HEK293 (cell line): ENCODE measurements at regions of chr1 and their contacts with region 1.

Region 1: DNA sequence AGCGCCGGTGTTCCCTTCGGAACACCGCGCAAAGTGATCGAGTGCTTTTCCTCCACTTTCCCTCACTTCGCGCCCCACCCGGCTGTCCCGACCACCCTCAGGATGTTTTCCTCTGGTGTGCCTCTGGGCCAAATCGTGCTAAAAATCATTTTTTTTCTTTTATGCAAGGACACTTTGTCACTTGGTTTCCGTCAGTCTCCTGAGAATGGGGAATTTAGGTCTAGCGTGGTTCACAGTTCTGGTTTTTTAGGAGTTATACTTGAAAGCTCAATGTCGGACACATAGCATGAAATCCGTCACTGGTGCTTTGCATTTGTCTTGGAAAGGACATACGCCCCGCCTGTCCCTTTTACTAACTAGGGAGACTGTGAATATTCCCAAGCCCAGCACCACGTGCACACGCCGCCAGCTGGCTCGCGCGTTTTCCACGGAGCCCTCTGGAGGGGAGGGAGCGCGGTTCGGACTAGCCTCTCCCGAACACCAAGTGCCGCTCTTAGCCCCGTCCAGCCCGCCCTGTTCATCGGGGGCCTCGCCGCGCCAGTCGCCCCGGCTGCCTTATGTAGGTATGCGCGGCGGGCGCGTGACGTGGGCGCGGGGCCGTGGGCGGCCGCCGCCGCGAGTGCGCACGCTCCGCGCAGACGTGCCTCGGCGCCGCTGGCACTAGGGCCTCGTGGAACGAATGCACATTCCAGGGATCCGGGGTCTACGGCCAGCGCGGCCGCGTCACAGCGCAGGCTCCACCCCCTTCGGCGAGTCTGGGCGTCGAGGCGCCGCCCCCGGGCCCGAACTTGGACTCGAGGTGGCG is 572 bp upstream of the IRF2BP2 start:
- H3K4me3 ChIP-seq: peak overlapping the region; percentile 49
- H3K27ac ChIP-seq: peak overlapping the region; percentile 96
- H3K4me1 ChIP-seq: peaks cover 25% of the 10 kb centered on the region
- CTCF ChIP-seq: peak; percentile 72

Region 2: DNA sequence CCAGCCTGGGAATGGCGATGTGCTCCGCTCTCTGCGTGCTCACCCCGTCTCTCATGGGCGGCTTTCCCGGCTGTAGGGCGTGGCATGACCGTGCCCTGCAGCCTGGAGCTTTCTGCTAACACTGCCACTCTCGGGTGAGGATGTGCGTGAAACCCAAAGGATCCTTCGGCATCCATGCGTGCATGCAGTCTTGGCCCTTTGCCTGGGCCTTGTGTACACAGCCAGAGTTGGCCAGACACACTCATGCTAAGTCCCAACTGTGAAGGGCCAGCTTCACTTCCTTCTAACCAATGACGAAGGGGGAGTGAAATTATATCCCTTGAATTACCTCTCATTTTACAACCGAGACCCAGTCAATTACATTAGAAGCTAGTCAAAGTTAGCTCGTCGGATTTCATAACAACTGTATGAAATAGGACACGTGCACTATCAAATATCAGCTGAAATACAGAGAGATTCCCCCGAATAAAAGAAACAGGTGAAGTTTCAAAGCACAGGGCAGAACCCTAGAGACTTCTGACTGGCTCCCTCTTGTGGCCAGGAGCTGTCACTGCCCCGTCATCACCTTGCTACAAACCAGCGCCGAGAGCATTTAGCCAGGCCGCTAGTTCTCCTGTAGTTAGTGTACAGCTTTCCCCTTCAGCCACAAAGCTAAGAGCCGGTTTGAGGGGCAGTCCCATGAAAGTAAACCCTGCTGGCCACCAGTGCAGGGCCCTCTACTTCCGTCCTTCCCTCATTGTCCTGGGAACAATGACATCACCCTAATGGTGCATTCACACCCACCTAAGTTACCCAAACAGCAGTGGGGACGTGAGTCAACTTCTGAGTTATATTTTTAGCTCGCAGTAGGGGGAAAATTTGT is 300.7 kb before region 1 on chr1:
- CTCF ChIA-PET with region 1: no interaction called
- POLR2A ChIA-PET with region 1: no interaction called
- H3K4me3 ChIP-seq: no peak overlapping the region
- H3K27ac ChIP-seq: no peak overlapping the region
- H3K4me1 ChIP-seq: no peaks in the 10 kb centered on the region
- CTCF ChIP-seq: peak; percentile 86

Region 3: GRCh38 chr1:234499119-234499942 is 111.2 kb before region 1 on chr1:
- CTCF ChIA-PET with region 1: interaction called, 46 read pairs
- POLR2A ChIA-PET with region 1: interaction called, 12 read pairs
- H3K4me3 ChIP-seq: no peak overlapping the region
- H3K27ac ChIP-seq: peak overlapping the region; percentile 42
- H3K4me1 ChIP-seq: peaks cover 15% of the 10 kb centered on the region
- CTCF ChIP-seq: peak; percentile 98

Region 4: GRCh38 chr1:234578721-234579120 is 31.8 kb before region 1 on chr1:
- CTCF ChIA-PET with region 1: no interaction called
- POLR2A ChIA-PET with region 1: no interaction called
- H3K4me3 ChIP-seq: no peak overlapping the region
- H3K27ac ChIP-seq: no peak overlapping the region
- H3K4me1 ChIP-seq: 0 out of 2 replicates have a peak, but pooled peaks cover 2% of the 10 kb centered on the region
- CTCF ChIP-seq: no peak

Region 5: GRCh38 chr1:234589064-234589800 is 21.3 kb before region 1 on chr1:
- CTCF ChIA-PET with region 1: no interaction called
- POLR2A ChIA-PET with region 1: no interaction called
- H3K4me3 ChIP-seq: no peak overlapping the region
- H3K27ac ChIP-seq: no peak overlapping the region
- H3K4me1 ChIP-seq: peaks cover 7% of the 10 kb centered on the region; the same call in 1 of the 2 replicates
- CTCF ChIP-seq: no peak

Region 6: DNA sequence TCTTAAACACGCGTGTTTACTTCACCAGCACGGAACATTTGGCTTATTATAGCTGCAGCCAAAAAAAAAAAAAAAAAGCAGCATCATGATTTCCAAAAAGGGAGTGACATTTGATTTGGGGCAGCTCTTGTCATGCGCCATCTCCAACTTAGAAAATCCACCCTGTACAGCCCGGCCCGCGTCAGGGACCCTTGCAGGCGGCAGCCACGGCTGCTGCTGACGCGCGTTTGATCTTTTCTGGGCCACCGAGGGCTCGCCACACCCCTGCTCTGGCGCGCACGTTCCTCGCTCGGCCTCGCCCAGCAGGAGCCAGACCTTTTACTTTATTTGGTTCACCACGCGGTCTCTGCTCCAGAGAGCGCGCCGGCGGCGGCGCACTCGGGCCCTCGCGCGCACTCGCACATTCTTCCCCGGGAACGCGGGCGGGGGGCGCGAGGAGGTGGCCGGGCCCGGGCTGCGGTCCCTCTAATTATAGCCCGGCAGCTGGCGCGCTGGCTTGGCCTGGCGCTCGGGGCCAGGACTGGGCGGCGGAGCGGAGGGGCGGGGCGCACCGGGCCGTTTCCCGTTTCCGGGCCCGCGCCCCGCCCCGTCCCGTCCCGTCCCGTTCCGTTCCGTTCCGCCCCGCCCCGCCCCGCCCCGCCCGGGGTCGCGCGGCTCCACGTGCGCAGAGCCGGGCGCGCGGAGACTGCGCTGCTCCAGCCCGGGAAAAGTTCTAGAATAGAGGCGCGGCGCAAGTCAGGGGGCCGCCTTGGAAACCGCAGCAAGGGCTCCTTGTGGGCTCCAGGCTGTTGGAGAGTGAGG is 10.7 kb before region 1 on chr1:
- CTCF ChIA-PET with region 1: interaction called, 12 read pairs
- POLR2A ChIA-PET with region 1: interaction called, 30 read pairs
- H3K4me3 ChIP-seq: peak overlapping the region; percentile 45
- H3K27ac ChIP-seq: peak overlapping the region; percentile 96
- H3K4me1 ChIP-seq: peaks cover 52% of the 10 kb centered on the region
- CTCF ChIP-seq: peak; percentile 60; the same call in 1 of the 2 replicates

Region 7: GRCh38 chr1:234631721-234632125 is 21.2 kb after region 1 on chr1:
- CTCF ChIA-PET with region 1: interaction called, 5 read pairs
- POLR2A ChIA-PET with region 1: interaction called, 12 read pairs
- H3K4me3 ChIP-seq: no peak overlapping the region
- H3K27ac ChIP-seq: no peak overlapping the region
- H3K4me1 ChIP-seq: no peaks in the 10 kb centered on the region
- CTCF ChIP-seq: no peak

Region 8: DNA sequence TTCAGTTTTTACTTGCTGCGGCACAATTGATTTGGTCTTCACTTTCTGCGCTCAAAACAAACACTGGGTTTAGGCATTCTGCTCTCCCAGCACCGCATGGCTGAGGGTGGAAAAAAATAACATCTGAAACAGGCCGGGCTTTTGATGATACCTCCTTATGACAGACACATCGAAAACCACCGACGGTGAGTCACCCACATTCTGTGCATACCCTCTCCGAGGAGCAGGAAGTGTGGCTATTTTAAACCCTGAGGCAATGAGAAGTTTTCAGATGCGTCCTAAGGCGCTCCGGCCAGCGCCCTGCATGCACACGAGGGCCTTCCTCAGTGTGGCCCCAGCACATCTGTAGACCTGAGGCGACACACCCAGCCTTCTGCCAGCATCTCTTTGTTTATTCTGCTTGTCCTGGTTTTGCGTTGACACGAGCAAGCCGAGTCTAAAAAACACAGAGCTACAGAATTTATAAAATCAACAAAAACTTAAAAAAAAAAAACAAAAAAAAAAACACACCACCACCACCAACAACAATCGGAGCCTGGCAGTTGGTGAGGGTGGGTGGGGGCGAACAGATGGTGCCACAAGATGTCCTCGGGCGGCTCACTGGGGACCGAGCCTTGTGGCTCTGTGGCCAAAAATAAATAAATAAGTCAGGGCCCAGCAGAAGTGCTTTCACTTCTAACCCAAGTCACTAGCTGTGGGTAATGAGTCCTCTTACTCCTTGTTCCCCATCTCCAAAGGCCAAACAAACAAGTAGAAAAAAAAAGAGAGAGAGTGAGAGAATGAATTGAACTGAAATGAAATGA is 162.0 kb after region 1 on chr1:
- CTCF ChIA-PET with region 1: interaction called, 3 read pairs
- POLR2A ChIA-PET with region 1: interaction called, 15 read pairs
- H3K4me3 ChIP-seq: no peak overlapping the region
- H3K27ac ChIP-seq: peak overlapping the region; percentile 62
- H3K4me1 ChIP-seq: peaks cover 7% of the 10 kb centered on the region
- CTCF ChIP-seq: no peak

Region 9: DNA sequence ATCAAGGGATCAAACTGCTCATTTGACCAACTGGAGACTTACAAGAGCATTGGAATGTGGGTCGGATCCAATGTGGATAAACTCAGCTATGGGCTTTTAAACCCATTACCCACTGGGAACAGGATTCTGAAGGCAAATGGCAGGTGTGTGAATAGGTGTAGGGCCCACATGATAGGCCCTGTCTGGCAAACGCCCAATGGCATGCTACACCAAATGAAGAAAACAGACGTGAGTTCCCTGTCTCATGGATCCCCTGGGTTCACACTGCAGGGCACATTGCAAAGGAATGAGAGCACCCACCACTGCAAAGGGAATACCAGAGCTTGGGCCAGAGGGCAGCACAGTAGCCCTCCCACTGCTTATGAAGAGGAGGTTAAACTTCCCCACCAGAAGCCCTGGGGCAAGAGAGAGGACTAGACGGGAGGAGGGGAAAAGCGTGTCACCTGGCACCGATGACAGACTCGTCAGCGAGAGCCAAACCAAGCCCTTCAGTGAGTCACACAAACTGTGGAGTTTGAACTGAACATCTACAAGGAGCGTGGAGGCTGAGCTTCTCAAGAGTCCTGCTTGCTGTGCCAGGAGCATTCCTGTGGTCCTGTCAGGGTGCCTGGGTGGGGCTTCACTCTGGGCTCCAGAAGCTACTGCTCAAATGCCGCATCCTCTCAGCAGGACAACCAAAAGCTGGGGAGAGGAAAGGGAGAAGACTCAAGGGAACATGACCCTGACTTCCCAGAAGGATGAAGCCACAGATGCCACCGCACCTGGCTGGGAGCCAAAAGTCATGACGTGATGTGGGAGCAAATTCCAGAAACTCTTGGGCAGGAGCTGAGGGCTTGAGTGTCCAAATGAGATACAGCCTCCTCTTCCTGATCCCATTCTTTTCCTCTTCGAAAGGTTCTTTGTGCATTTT is 457.0 kb after region 1 on chr1:
- CTCF ChIA-PET with region 1: interaction called, 3 read pairs
- POLR2A ChIA-PET with region 1: interaction called, 18 read pairs
- H3K4me3 ChIP-seq: no peak overlapping the region
- H3K27ac ChIP-seq: peak overlapping the region; percentile 40
- H3K4me1 ChIP-seq: peaks cover 9% of the 10 kb centered on the region
- CTCF ChIP-seq: no peak